ENCODE measurements at regions of chr9 and their contacts with region 1.

Region 1: DNA sequence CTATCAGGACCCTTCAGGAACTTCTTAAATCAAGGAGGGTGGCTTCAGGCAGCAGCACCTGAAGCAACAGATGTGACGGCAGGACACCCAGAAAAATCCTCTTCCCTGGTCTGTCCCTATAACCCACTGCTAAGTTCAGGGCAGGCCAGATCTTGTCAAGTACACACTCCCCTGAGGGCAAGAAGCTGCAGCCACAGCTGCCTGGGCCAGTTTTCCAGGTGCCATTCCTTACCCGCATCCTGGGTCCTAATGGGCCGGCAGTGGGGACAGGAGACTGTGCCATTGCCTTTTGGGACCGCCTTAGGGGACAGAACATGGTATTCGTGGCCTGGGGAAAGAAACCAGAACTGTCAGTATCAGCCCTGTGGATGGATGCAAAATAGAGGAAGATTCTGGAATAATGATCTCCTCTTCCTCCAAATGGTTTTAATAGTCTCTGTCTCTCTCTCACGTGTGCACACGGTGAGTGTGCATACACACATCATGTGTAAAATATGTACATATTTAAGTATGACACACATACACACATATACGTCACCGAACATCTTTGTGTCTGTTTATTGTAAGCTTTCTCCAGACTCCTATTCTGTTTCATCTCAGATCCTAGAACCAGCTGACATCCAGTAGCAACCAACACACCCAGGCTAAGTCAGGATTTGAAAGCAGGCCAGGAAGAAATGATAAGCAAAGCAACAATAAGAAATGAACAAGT is 14.0 kb downstream of the ORM2 start:
- DNase-seq: no peak
- ATAC-seq: no peak
- H3K4me3 ChIP-seq: no peak overlapping the region
- H3K27ac ChIP-seq: no peak overlapping the region
- H3K4me1 ChIP-seq: no peaks in the 10 kb centered on the region
- H3K27me3 ChIP-seq: no peaks in the 10 kb centered on the region
- CTCF ChIP-seq: no peak

Region 2: GRCh38 chr9:114317665-114318357 is 25.8 kb before region 1 on chr9:
- intact Hi-C with region 1: no loop called
- DNase-seq: no peak
- ATAC-seq: no peak
- H3K4me3 ChIP-seq: no peak overlapping the region
- H3K27ac ChIP-seq: no peak overlapping the region
- H3K4me1 ChIP-seq: no peaks in the 10 kb centered on the region
- H3K27me3 ChIP-seq: peaks cover 0 to 8% (median 0%) of the 10 kb centered on the region in 3 donors
- CTCF ChIP-seq: no peak

Region 3: GRCh38 chr9:114420581-114420980 is 76.9 kb after region 1 on chr9:
- intact Hi-C with region 1: loop called in 1 of 2 experiments (anchors 2 kb)
- DNase-seq: no peak
- ATAC-seq: no peak
- H3K4me3 ChIP-seq: no peak overlapping the region
- H3K27ac ChIP-seq: no peak overlapping the region
- H3K4me1 ChIP-seq: no peaks in the 10 kb centered on the region
- H3K27me3 ChIP-seq: no peaks in the 10 kb centered on the region
- CTCF ChIP-seq: no peak